T-cell (primary cell): ENCODE measurements at regions of chr17 and their contacts with region 1.

Region 1: GRCh38 chr17:63946440-63947367 is 14.6 kb upstream of the CD79B start:
- DNase-seq: peak in 32 of 35 experiments; percentile 6 to 79 (median 40)
- ATAC-seq: peak; percentile 71 to 86 (median 82)
- H3K4me3 ChIP-seq: peak overlapping the region; percentile 2 to 18
- H3K4me3 Mint-ChIP-seq: peak overlapping the region; percentile 51 to 70 (median 59)
- H3K27ac ChIP-seq: no peak overlapping the region
- H3K27ac Mint-ChIP-seq: no peak overlapping the region
- H3K4me1 ChIP-seq: peaks cover 3 to 28% of the 10 kb centered on the region in 2 experiments
- H3K4me1 Mint-ChIP-seq: peaks cover 15 to 27% (median 17%) of the 10 kb centered on the region in 3 donors
- H3K27me3 ChIP-seq: peaks cover 0 to 7% of the 10 kb centered on the region in 2 experiments
- H3K27me3 Mint-ChIP-seq: no peaks in the 10 kb centered on the region

Region 2: GRCh38 chr17:63919311-63919723 is 27.4 kb before region 1 on chr17:
- CTCF ChIA-PET with region 1: interaction called, 10 to 12 read pairs
- POLR2A ChIA-PET with region 1: no interaction called
- DNase-seq: peak; percentile 37 to 89 (median 61)
- ATAC-seq: peak; percentile 91 to 99 (median 94)
- H3K4me3 ChIP-seq: no peak overlapping the region
- H3K4me3 Mint-ChIP-seq: no peak overlapping the region
- H3K27ac ChIP-seq: no peak overlapping the region
- H3K27ac Mint-ChIP-seq: peak overlapping the region; percentile 5 to 69
- H3K4me1 ChIP-seq: peaks cover 0 to 10% of the 10 kb centered on the region in 2 experiments
- H3K4me1 Mint-ChIP-seq: peaks cover 8 to 13% (median 9%) of the 10 kb centered on the region in 3 donors
- H3K27me3 ChIP-seq: peaks cover 0 to 7% of the 10 kb centered on the region in 2 experiments
- H3K27me3 Mint-ChIP-seq: peaks cover 3 to 4% of the 10 kb centered on the region in 2 donors